AG04449 (cell line): ENCODE measurements at regions of chr9 and their contacts with region 1.

Region 1: GRCh38 chr9:134175808-134176598 is 11.6 kb upstream of the RNU6ATAC start:
- DNase-seq: no peak
- H3K4me3 ChIP-seq: no peak overlapping the region
- CTCF ChIP-seq: peak; percentile 23

Region 2: DNA sequence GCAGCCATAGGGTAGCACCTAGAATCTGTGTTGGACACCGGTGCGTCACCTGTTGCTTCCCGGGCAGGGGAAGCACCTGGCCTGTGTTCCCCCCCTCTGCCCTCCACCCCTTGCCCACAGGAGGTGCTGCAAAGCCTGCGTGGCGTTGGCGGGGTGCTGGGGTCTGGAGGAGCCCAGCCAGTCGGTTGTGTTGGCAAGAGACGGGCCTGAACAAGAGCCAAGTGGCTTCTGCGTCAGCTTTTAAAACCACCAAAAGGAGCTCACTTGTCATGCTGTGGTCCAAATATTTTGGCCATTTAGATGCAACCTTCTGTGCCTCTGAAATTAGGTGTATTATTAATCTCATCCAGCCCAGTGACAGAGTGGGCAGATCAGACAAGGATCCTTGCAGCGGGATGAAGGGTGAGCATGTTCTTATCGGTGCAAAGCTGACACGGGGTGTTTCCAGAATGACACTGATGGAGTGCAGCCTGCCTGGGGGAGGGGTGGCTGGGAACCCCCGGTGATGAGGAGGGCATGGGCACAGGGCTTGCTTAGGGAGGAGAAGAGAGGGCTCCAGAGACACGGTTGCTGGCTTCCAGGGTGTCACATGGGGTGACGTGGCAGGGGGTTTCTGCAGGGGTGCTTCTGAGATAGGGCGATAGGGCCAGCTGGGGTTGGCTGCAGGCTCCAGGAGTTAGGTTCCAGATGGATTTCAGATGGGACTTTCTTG is 140.6 kb after region 1 on chr9:
- CTCF ChIA-PET with region 1: interaction called, 54 read pairs
- POLR2A ChIA-PET with region 1: interaction called, 3 read pairs
- DNase-seq: no peak
- H3K4me3 ChIP-seq: peak overlapping the region; percentile 12; the same call in 1 of the 2 replicates
- CTCF ChIP-seq: peak; percentile 7

Region 3: DNA sequence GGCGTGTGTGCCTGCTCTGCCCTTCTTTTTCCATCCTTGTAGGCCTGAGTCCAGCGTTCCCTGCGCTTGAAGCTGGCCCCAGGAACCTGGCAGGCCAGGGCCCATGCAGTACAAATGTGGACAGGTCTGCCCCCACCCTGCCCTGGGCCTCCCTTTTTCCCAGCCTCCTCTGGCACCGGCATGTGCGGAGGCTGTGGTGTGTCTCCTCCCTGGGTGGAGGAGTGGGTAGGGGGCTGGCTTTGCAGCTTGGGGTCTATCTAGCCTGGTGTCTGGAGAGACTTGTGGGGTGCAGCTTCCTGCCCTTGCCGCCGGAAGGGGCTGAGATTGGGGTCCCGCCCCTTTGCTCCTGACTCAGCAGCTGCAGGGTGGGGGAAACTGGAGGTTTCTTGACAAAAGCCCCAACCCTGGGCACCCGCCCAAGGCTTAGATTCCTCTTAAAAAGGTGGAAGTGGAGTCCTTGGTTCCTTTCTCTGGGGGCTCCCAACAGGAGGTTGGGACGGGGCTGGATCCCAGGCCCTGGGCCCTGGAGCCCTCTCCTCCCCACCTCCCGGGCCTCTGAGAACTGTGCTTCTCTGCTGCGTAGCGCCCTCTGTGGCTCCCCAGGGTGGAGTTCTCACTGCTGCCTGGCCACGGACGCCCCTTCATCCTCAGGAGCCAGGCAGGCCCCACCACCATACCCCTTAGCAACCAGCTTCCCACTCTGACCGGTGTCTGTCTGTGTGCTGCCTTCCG is 168.2 kb after region 1 on chr9:
- CTCF ChIA-PET with region 1: interaction called, 11 read pairs
- POLR2A ChIA-PET with region 1: no interaction called
- DNase-seq: no peak
- H3K4me3 ChIP-seq: no peak overlapping the region
- CTCF ChIP-seq: no peak

Region 4: GRCh38 chr9:134365791-134366688 is 190.0 kb after region 1 on chr9:
- CTCF ChIA-PET with region 1: interaction called, 20 read pairs
- POLR2A ChIA-PET with region 1: no interaction called
- DNase-seq: peak; percentile 62
- H3K4me3 ChIP-seq: peak overlapping the region; percentile 20
- CTCF ChIP-seq: no peak

Region 5: DNA sequence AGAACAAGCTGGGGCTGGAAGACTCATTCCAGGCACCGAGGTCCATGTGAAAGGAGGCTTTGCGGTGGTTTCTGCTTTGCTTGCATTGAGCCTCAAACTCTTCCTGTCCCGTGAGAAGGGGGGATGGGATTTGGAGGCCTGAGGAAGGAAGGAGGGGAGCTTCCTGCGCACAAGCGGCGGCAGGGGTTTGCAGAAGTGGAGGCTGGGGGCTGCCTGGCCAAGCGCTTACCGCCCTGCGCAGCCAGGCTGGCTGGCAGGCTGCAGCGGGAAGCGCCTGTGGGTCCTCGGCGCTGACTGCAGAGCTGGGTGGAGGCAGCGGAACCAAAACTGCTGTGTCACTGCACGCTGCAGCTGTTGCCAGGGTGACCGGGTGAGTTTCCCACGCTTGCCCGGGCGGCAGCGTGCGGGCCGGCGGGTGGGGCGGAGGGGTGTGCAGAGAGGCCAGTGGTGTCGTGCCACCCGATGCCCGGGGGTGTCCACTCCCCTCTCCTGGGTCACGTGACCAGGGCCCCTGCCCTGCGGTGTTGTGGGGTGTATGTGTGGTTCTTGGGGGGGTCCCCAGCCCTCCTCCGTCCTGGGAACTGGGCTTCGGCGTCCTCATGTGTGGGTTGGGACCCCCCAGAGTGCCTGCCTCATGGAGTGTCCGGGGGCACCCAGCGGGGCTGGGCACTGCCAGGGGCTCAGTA is 231.3 kb after region 1 on chr9:
- CTCF ChIA-PET with region 1: interaction called, 15 read pairs
- POLR2A ChIA-PET with region 1: no interaction called
- DNase-seq: peak; percentile 47
- H3K4me3 ChIP-seq: peak overlapping the region; percentile 38
- CTCF ChIP-seq: no peak

Region 6: DNA sequence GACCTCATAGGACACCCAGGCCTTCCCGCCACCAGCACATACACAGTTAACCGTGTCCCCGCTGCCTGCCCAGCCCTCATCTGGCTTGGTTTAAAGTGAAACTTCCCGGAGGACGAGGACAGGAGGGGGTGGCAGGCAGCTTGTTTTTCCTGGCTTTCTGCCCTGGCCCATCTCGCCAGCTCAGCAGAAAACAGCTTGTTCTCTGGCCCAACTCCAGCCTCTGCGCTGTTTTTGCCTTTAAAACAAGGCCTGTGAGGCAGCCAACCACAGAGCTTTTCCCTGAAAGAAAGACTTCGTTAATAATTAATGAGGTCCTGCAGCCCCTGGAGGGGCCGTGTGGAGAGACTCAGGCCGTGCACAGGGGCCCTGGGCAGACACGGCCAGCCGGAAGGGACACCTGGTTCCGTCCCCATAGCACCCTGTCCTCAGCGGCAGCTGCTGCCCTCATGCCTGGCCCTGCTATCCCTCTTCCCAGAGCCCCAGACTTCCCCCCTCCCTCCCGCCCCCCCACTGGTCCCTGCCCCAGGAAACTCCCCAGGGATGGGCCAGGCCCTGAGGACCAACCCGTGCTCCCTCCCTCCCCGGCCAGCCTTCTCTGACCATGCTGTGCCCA is 259.0 kb after region 1 on chr9:
- CTCF ChIA-PET with region 1: interaction called, 96 read pairs
- POLR2A ChIA-PET with region 1: no interaction called
- DNase-seq: peak; percentile 80
- H3K4me3 ChIP-seq: no peak overlapping the region
- CTCF ChIP-seq: no peak

Region 7: GRCh38 chr9:134455934-134456739 is 280.1 kb after region 1 on chr9:
- CTCF ChIA-PET with region 1: interaction called, 10 read pairs
- POLR2A ChIA-PET with region 1: no interaction called
- DNase-seq: peak; percentile 97
- H3K4me3 ChIP-seq: 0 out of 2 replicates have a peak overlapping the region, but pooled peaks have one; percentile 8
- CTCF ChIP-seq: no peak